ENCODE measurements at regions of chr18 and their contacts with region 1.

Region 1: DNA sequence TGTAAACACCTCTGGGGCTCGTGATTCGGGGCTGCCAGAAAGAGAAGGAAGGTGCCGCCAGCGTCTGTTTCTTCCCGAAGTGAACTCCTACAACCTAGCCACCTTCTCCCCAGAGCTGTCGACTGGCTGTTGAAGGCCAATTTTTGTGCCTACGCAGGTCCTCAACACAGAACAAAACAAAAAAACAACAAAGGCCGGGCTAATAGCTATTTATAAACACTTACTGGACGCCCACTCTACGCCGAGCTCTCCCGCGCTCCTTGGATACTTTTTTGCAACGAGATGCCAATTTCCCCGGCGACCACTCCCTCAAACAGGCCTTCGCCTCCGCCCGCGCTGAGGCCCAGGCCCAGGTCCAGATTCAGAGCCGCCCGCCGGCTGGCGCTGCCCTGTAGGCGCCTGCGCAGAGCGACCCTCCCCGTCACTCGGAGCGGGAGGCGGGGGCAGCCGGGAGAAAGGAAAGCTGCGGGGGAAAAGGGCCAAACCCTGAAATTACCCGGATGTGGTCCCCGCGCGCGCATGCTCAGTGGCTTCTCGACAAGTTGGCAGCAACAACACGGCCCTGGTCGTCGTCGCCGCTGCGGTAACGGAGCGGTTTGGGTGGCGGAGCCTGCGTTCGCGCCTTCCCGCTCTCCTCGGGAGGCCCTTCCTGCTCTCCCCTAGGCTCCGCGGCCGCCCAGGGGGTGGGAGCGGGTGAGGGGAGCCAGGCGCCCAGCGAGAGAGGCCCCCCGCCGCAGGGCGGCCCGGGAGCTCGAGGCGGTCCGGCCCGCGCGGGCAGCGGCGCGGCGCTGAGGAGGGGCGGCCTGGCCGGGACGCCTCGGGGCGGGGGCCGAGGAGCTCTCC is at the start of gene SMAD4:
- H3K4me3 Mint-ChIP-seq: peak within 1 kb of the TSS; percentile 97
- H3K27ac Mint-ChIP-seq: peak within 1 kb of the TSS; percentile 97
- H3K4me1 Mint-ChIP-seq: peaks cover 50% of the 10 kb centered on the region
- H3K27me3 Mint-ChIP-seq: no peaks in the 10 kb centered on the region

Region 2: GRCh38 chr18:50806208-50806616 is 223.7 kb before region 1 on chr18:
- intact Hi-C with region 1: loop called (anchors 5 kb)
- H3K4me3 Mint-ChIP-seq: no peak overlapping the region
- H3K27ac Mint-ChIP-seq: peak overlapping the region; percentile 64
- H3K4me1 Mint-ChIP-seq: peaks cover 33% of the 10 kb centered on the region
- H3K27me3 Mint-ChIP-seq: no peaks in the 10 kb centered on the region

Region 3: DNA sequence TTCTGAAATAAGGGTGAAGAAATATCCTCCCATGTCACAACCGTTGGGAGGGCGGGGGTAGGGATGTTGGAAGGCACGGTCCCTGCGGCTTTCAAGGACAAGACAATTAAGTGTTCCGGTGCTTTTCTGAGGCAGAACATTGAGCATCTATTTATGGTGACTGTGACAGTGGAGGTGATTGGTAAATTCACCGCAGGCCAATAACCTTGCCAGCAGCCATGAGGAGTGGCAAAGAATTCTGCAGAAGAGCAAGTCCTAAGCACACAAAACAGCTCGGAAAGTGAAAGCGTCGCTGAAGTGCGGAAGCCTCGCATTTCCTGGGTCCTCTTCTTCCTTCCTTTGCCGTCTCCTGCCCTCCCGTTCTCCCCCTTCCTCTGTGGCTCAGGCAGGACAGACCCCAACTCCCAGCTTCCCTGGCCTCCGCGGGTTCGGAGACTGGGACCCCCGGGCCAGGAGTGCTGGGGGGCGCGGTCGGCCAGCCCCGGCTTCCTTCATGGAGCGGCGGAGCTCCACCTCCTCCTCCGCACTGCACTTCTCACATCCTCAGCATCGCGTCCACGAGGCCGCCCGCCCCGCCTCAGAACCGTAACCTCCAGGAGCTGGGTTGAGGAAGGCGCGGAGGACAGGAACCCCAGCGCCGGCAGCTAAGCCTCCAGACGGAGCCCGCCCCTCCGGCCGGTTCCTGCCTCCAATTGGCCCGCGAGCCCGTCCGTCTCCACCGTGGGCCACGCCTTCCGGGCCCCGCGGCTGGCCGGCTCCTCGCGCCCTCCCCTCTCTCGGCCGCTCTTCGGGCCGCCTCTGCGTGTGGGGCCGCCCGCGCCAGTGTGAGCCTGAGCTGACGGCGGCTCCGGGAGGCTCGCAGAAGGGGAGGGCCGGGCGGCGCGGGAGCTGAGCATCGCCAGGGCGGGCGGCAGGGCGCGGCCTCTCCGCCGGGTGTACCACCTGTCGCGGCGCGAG is 151.3 kb before region 1 on chr18 and contains the start of gene ME2:
- intact Hi-C with region 1: loop called (anchors 1 kb)
- H3K4me3 Mint-ChIP-seq: peak within 1 kb of the TSS; percentile 98
- H3K27ac Mint-ChIP-seq: peak within 1 kb of the TSS; percentile 98
- H3K4me1 Mint-ChIP-seq: peaks cover 27% of the 10 kb centered on the region
- H3K27me3 Mint-ChIP-seq: no peaks in the 10 kb centered on the region

Region 4: DNA sequence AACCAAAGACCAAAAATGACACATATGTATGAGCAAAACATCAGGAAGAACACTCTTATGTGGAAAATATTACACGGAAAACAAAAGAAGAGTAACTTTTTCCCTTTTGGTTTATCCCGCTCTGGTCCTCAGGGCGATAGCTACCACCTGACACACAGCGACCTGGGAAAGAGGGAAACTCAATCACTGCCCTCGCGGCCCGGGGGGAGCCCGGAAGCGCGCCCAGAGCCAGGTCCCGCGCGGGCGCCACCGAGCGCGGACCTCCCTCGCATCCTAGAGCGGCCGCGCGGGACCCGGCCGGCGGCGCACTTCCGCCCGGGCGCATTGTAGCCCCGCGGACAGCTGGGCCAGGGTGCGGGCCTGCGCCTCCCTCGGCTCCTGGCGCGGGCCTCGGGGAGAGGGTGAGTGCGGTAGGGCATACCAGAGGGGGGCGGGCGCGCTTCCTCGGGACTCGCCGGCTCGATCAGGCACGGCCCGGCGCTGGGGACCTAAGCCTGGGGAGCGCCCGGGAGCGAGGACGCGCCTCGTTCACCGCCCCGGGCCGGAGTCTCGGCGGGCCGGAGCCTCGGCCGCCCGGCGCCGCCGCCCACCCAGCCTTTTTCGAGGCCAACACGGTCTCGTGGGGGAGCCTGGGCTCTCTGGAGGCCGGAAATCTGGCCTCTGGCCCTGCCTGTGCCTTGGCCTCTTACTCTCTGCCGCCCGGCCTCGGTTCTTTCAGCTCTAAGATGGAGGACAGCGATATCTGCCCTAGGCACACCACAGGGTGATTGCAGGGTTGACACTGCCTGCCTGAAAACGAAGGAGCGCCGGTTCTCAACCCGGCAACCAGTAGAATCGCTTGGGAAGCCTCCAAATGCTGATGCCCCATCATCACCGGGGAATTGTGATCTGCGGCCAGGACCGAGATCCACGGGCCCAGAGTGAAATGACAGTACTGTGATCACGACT is 61.9 kb before region 1 on chr18 and contains the start of gene ELAC1:
- intact Hi-C with region 1: loop called (anchors 2 kb)
- H3K4me3 Mint-ChIP-seq: peak within 1 kb of the TSS; percentile 83
- H3K27ac Mint-ChIP-seq: peak within 1 kb of the TSS; percentile 87
- H3K4me1 Mint-ChIP-seq: peaks cover 21% of the 10 kb centered on the region
- H3K27me3 Mint-ChIP-seq: no peaks in the 10 kb centered on the region